Activated CD8-positive, alpha-beta T cell treated with anti-CD3 and anti-CD28 coated beads, Interleukin-2, amount 10 ng/mL, durations not matched to agents 7 days and 5 days (primary cell): ENCODE measurements at regions of chr22 and their contacts with region 1.

Region 1: DNA sequence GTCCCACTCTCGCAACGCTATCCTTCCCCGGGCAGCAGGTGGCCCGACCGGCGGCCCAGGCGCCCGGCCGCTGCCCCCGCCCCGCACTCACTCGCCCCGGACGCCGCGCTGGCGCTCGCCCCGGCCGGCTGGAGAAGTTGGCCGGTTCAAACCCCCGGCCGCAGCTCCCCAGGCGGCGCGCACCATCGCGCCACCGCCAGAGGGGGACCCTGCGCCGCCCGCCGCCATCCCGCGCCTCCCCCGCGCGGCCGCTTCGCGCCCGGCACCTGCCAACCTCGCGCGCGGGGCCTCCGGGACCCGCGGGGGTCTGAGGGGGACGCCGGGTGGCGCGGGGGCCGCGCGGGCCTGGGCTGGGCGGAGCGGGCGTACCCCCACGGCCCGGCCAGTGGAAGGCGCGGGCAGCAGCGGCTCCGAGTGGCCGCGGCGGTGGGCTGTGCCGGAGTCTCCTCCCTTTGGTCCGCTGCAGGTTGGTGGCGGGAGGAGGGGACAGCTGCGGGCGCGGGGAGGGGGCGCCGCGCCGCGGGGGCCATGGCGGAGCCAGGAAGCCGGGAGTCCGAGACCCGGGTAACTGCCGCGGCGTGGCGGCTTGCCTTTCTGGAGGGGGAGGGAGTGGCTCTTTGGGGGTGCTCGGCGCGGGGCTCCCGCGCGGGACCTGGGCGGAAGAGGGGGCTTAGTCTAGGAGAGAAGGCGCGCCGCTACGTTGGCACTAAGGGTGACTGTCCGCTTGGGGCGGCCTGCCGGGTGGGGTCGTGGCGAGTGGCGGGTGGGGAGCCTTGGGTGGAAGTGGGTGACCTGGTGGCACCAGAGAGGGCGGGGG is at the starts of genes MPST and TST:
- DNase-seq: peak; percentile 54
- ATAC-seq: peak; percentile 87
- H3K4me3 Mint-ChIP-seq: peak within 1 kb of the TSS; percentile 88
- H3K27ac Mint-ChIP-seq: peak within 1 kb of the TSS; percentile 87
- H3K4me1 Mint-ChIP-seq: peaks cover 24% of the 10 kb centered on the region
- H3K27me3 Mint-ChIP-seq: peaks cover 2% of the 10 kb centered on the region
- total RNA-seq, gene MPST: 28.5 to 33.6 TPM
- total RNA-seq, gene TST: 8.3 to 9.4 TPM

Region 2: GRCh38 chr22:37037669-37038068 is 18.2 kb after region 1 on chr22:
- CTCF ChIA-PET with region 1: interaction called, 13 read pairs
- POLR2A ChIA-PET with region 1: no interaction called
- DNase-seq: no peak
- ATAC-seq: no peak
- H3K4me3 Mint-ChIP-seq: no peak overlapping the region
- H3K27ac Mint-ChIP-seq: no peak overlapping the region
- H3K4me1 Mint-ChIP-seq: peaks cover 9% of the 10 kb centered on the region
- H3K27me3 Mint-ChIP-seq: peaks cover 23% of the 10 kb centered on the region